Posterior vena cava (tissue), 2 donors: ENCODE measurements at regions of chr3 and their contacts with region 1.

Region 1: DNA sequence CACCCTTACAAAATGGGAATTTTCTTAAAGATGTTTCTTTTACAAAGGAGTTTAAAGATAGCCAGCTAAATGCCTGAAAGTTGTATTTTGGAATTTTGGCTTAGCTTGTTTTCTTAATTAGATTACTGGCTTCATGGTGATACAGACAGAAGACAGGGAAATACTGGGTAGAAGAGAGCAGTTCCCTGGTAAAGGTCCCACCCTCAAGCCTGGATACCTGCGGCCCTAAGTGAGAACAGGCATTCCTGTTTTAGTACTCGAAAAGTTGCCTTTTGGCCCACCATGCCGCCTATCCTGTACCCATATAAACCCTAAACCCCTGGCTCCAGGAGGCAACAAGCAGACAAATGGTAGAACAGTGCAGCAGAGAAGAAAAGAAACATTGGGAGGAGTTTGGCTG is 29.4 kb downstream of the SETMAR start:
- DNase-seq: no peak

Region 2: DNA sequence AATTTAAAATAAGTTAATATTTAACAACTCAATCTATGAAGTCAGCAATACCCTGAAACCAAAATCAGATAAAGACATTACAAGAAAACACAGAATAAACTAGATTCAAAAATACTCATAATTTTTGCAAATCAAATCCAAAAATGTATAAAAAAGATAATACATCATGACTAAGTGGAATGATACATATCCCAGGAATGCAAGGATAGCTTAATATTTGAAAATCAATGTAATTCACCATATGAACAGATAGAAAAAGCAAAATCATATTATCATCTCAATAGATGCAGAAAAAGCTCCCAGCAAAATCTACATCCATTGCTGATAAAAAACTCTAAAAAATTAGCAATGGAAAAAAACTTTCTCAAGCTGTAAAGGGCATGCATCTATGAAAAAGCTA is 41.1 kb after region 1 on chr3:
- intact Hi-C with region 1: loop called in 1 of 2 experiments (anchors 2 kb)
- DNase-seq: no peak

Region 3: DNA sequence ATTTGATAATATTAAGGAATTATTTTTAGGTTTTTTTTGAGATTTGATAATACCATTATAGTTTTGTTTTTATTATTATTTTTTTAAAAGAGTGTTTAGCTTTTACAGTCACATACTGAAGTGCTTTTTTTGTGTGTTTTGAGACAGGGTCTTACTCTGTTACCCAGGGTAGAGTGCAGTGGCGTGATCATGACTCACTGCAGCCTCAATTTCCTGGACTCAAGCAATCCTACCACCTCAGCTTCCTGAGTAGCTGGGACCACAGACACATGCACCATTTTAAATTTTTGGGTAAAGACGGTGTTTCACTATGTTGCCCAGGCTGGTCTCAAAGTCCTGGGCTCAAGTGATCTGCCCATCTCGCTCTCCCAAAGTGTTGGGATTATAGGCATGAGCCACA is 61.5 kb after region 1 on chr3:
- intact Hi-C with region 1: no loop called
- DNase-seq: no peak